ENCODE measurements at regions of chr13 and their contacts with region 1.

Region 1: GRCh38 chr13:74761801-74762757 is 627.9 kb upstream of the KLF12 start:
- DNase-seq: no peak
- H3K4me3 Mint-ChIP-seq: no peak overlapping the region
- H3K27ac Mint-ChIP-seq: no peak overlapping the region
- H3K4me1 Mint-ChIP-seq: no peaks in the 10 kb centered on the region
- H3K27me3 Mint-ChIP-seq: no peaks in the 10 kb centered on the region

Region 2: GRCh38 chr13:75202981-75203380 is 440.9 kb after region 1 on chr13:
- intact Hi-C with region 1: loop called (anchors 5 kb)
- DNase-seq: no peak
- H3K4me3 Mint-ChIP-seq: no peak overlapping the region
- H3K27ac Mint-ChIP-seq: no peak overlapping the region
- H3K4me1 Mint-ChIP-seq: no peaks in the 10 kb centered on the region
- H3K27me3 Mint-ChIP-seq: peaks cover 14% of the 10 kb centered on the region

Measured in activated T-helper 2 cell treated with anti-CD3 and anti-CD28 coated beads, Interferon-gamma antibody, Interleukin-2, Interleukin-4, amounts not matched to agents 10 μg/mL and 5 μg/mL and 100 μg/mL, durations not matched to agents 14 hours and 24 hours and 36 hours (primary cell).